Mammary epithelial cell (primary cell): ENCODE measurements at regions of chr11 and their contacts with region 1.

Region 1: GRCh38 chr11:88543902-88544655 is 206.5 kb upstream of the CTSC start:
- DNase-seq: peak; percentile 87
- H3K4me3 ChIP-seq: no peak overlapping the region
- H3K27ac ChIP-seq: peak overlapping the region; percentile 39
- H3K4me1 ChIP-seq: peaks cover 17% of the 10 kb centered on the region
- H3K27me3 ChIP-seq: no peaks in the 10 kb centered on the region
- CTCF ChIP-seq: peak; percentile 98 to 100

Region 2: DNA sequence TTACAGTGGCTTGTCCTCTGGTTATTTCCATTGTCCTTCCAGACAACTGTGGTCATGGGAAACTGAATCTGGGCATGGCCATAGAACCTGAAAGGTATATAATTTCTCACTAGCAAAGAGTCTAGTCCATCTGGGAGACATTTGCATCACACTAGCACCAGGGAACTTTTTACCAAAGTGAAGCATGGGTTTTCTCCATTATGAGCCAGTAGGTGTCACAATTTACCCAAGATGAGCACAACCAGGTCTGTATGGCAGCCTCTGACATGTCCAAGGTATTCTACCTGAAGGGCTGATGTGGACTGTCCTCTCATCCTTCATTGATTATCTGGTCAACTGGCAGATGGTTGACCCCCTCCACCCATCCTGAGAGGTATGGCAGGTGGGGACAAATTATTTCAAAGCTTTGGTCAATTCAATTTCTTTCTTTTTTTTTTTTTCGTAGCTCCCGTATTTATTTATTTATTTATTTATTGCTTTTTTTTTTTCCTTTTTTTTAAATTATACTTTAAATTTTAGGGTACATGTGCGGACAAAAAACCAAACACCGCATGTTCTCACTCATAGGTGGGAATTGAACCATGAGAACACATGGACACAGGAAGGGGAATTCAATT is 1080.5 kb before region 1 on chr11:
- CTCF ChIA-PET with region 1: no interaction called
- dilution Hi-C with region 1: no loop called
- in situ Hi-C with region 1: loop called in 1 of 2 experiments (anchors 25 kb)
- intact Hi-C with region 1: loop called (anchors 1 kb)
- DNase-seq: peak; percentile 54
- H3K4me3 ChIP-seq: no peak overlapping the region
- H3K27ac ChIP-seq: no peak overlapping the region
- H3K4me1 ChIP-seq: no peaks in the 10 kb centered on the region
- H3K27me3 ChIP-seq: peaks cover 5% of the 10 kb centered on the region
- CTCF ChIP-seq: peak; percentile 42 to 73

Region 3: GRCh38 chr11:88016392-88017170 is 527.5 kb before region 1 on chr11:
- CTCF ChIA-PET with region 1: no interaction called
- dilution Hi-C with region 1: loop called (anchors 25 kb)
- in situ Hi-C with region 1: loop called (anchors 25 kb)
- intact Hi-C with region 1: loop called (anchors 1 kb)
- DNase-seq: peak; percentile 66
- H3K4me3 ChIP-seq: no peak overlapping the region
- H3K27ac ChIP-seq: no peak overlapping the region
- H3K4me1 ChIP-seq: no peaks in the 10 kb centered on the region
- H3K27me3 ChIP-seq: no peaks in the 10 kb centered on the region
- CTCF ChIP-seq: peak; percentile 79 to 81

Region 4: DNA sequence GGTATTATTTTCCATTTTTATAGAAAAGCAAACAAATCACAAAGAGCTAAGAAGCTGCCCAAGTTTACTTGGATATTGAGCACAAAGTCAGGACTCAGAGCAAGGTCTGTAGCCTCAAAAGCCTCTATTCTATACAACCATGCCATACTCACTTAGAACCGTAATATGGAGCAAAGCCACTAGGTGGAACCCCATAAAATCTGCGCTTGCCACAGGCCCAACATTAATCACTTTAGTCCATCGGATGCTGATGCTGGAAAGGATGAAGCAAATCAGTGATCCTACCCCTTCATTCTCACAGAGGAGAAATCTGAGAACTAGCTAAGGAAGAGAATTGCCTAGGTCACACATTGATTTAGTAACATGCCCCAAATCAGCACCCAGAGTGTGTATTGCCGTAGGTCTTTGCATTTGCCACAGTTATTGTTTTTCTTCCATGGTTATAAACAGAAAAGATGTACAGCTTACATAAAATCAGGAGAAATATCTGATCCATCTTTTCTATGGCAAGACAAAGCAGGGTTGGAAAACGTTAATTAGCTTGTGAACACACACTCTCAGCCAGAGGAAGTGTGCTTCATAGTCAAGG is 312.1 kb before region 1 on chr11:
- CTCF ChIA-PET with region 1: no interaction called
- dilution Hi-C with region 1: no loop called
- in situ Hi-C with region 1: no loop called
- intact Hi-C with region 1: loop called (anchors 1 kb)
- DNase-seq: peak; percentile 34
- H3K4me3 ChIP-seq: no peak overlapping the region
- H3K27ac ChIP-seq: no peak overlapping the region
- H3K4me1 ChIP-seq: no peaks in the 10 kb centered on the region
- H3K27me3 ChIP-seq: no peaks in the 10 kb centered on the region
- CTCF ChIP-seq: peak; percentile 72 to 75

Region 5: DNA sequence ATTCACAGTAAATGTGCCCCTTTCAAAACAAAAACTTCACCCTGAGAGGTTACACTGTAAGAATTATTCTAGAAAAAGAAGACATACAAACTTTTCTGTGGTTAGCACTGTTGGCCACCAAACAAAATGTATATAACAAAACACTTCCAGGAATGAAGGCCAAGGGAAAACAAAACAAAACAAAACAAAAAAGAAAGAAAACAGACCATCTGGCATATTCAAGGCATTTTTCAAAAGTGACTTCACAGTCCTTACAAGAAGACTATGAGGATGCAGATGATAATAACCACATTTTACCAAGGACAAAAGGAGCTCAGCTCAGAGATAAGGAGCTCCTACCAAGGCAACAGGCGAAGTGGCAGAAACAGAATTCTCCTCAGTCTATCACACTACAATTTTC is 231.5 kb before region 1 on chr11:
- CTCF ChIA-PET with region 1: no interaction called
- dilution Hi-C with region 1: no loop called
- in situ Hi-C with region 1: no loop called
- intact Hi-C with region 1: loop called (anchors 1 kb)
- DNase-seq: no peak
- H3K4me3 ChIP-seq: no peak overlapping the region
- H3K27ac ChIP-seq: no peak overlapping the region
- H3K4me1 ChIP-seq: peaks cover 34% of the 10 kb centered on the region
- H3K27me3 ChIP-seq: no peaks in the 10 kb centered on the region
- CTCF ChIP-seq: no peak

Region 6: GRCh38 chr11:88402192-88402715 is 141.8 kb before region 1 on chr11:
- CTCF ChIA-PET with region 1: no interaction called
- dilution Hi-C with region 1: loop called (anchors 5 kb)
- in situ Hi-C with region 1: no loop called
- intact Hi-C with region 1: no loop called
- DNase-seq: peak; percentile 90
- H3K4me3 ChIP-seq: no peak overlapping the region
- H3K27ac ChIP-seq: no peak overlapping the region
- H3K4me1 ChIP-seq: peaks cover 41% of the 10 kb centered on the region
- H3K27me3 ChIP-seq: no peaks in the 10 kb centered on the region
- CTCF ChIP-seq: no peak

Region 7: DNA sequence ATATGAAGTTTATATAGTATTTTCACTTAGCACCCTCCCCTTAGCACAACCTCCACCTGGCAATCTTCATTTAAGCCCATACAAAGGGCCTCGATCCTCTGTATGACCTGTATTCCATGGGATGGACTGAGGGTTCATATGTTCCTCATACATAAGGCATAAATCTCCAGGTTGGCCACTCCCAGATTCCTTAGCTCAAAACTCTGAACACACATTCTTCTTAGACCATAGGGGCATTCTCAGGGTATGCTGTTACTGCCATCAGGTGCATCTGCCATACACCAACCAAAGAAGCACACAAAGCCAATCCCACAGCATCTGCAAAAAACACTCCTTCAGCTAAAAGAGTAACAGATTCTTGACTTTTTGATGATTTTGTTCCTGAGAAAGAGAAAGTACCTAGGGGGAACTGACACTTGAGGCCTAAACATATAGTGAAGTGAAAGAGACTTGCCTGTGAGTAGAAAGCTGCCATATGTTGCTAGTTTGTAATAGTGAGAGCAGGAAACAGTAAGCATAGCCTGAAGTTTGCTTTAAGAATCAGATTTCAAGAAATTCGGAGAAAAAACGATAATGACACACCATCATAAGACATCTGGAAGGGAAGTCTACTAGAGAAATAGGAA is 108.8 kb before region 1 on chr11:
- CTCF ChIA-PET with region 1: no interaction called
- dilution Hi-C with region 1: no loop called
- in situ Hi-C with region 1: no loop called
- intact Hi-C with region 1: no loop called
- DNase-seq: no peak
- H3K4me3 ChIP-seq: no peak overlapping the region
- H3K27ac ChIP-seq: no peak overlapping the region
- H3K4me1 ChIP-seq: peaks cover 22% of the 10 kb centered on the region
- H3K27me3 ChIP-seq: no peaks in the 10 kb centered on the region
- CTCF ChIP-seq: no peak

Region 8: DNA sequence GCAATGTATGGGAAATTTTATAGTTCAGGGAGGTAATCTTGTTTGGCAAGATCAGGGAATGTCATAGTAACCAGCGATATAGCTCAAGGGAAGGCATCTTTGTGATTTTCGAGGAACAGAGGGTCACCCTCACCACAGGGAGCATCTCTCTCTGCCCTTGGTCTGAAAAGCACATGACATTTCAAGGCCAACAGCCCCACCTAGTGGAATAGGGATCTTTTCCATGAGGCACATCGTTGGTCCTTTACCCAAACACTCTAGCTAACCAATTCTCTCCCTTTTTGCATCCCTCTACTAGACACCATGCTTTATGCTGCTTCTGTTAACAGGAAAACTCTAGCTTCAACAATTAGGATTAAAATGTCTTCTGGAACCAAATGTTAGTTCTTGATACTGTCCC is 342.7 kb after region 1 on chr11:
- CTCF ChIA-PET with region 1: no interaction called
- dilution Hi-C with region 1: no loop called
- in situ Hi-C with region 1: no loop called
- intact Hi-C with region 1: loop called (anchors 2 kb)
- DNase-seq: peak; percentile 51
- H3K4me3 ChIP-seq: no peak overlapping the region
- H3K27ac ChIP-seq: no peak overlapping the region
- H3K4me1 ChIP-seq: no peaks in the 10 kb centered on the region
- H3K27me3 ChIP-seq: no peaks in the 10 kb centered on the region
- CTCF ChIP-seq: peak; percentile 42 to 70